OCI-LY7 (cell line): ENCODE measurements at regions of chr7 and their contacts with region 1.

Region 1: GRCh38 chr7:135147899-135148721 is at the start of gene TMEM140:
- DNase-seq: peak; percentile 31
- H3K4me3 ChIP-seq: peak within 1 kb of the TSS; percentile 36
- H3K27ac ChIP-seq: no peak within 1 kb of the TSS
- H3K4me1 ChIP-seq: peaks cover 9% of the 10 kb centered on the region
- CTCF ChIP-seq: no peak
- total RNA-seq, gene TMEM140: 0.41 TPM in 1 of 2 replicates, not detected in the other

Region 2: DNA sequence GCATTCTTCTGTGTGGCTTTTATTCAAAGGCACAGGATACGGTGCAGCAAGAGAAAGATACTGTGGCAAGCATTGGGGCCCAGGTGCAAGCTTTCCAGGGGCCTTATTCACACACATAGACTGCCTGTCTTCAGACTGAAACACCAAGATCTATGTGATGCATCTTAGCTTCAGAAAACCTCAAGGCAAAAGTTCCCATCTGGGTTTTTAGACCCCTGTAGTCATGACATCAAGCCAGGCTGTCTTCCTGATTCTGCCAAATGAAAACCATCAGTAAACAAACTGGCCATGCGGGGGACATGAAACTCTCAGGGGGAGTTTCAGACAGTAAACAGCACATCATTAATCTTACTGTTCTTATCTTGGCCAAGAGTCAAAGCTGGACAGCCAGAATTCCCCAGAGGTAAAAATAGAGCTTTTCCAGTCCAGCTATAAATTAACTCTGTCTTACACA is 152.0 kb before region 1 on chr7:
- CTCF ChIA-PET with region 1: no interaction called
- POLR2A ChIA-PET with region 1: no interaction called
- intact Hi-C with region 1: loop called (anchors 5 kb)
- DNase-seq: no peak
- H3K4me3 ChIP-seq: no peak overlapping the region
- H3K27ac ChIP-seq: no peak overlapping the region
- H3K4me1 ChIP-seq: no peaks in the 10 kb centered on the region
- CTCF ChIP-seq: no peak